Dorsolateral prefrontal cortex (tissue), 120 donors: ENCODE measurements at regions of chr5 and their contacts with region 1.

Region 1: GRCh38 chr5:132227485-132228240 is at the start of gene P4HA2:
- DNase-seq: peak; percentile 53 to 87 (median 78)
- H3K4me3 ChIP-seq: peak within 1 kb of the TSS; percentile 45 to 97 (median 85)
- H3K27ac ChIP-seq: peak within 1 kb of the TSS in 58 of 59 donors; percentile 1 to 99 (median 84)
- H3K27me3 ChIP-seq: no peaks in the 10 kb centered on the region
- CTCF ChIP-seq: peak in 10 of 56 donors; percentile 3 to 31 (median 14)
- total RNA-seq, gene P4HA2: 11.8 to 97.5 (median 27.5) TPM

Region 2: DNA sequence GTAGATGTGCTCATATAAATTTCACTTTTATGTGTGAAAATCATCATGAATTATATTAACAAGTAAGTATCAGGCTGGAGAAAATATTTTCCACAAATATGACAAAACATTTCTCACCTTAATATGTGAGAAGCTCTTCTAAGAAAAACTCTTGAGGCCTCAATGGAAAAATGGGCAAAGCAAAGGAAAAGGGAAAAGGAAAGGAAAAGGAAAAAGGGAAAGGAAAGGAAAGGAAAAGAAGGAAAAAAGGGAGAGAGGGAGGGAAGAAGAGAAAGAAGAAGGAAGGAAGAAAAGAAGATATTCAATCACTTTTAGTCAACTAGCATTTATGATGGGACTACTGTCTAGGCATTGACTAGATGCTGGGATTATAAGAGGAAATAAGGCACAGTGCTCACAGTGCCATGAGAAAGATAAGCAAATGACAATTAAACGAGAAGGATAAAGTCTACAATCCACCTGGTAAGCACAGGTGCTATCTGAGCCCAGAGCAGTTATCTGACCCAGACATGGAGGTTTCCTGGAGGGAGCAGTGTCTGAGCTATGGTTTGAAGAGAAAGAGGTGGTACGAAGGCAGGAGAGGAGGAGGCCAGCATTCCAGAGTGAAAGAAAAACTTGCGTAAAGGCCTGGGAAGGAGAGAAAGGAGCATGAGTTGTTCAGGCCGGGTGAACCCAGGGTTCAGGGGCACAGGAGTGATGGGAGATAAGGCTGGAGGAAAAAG is 197.9 kb before region 1 on chr5:
- intact Hi-C with region 1: no loop called
- DNase-seq: no peak
- H3K4me3 ChIP-seq: no peak overlapping the region
- H3K27ac ChIP-seq: no peak overlapping the region
- H3K27me3 ChIP-seq: no peaks in the 10 kb centered on the region
- CTCF ChIP-seq: no peak

Region 3: DNA sequence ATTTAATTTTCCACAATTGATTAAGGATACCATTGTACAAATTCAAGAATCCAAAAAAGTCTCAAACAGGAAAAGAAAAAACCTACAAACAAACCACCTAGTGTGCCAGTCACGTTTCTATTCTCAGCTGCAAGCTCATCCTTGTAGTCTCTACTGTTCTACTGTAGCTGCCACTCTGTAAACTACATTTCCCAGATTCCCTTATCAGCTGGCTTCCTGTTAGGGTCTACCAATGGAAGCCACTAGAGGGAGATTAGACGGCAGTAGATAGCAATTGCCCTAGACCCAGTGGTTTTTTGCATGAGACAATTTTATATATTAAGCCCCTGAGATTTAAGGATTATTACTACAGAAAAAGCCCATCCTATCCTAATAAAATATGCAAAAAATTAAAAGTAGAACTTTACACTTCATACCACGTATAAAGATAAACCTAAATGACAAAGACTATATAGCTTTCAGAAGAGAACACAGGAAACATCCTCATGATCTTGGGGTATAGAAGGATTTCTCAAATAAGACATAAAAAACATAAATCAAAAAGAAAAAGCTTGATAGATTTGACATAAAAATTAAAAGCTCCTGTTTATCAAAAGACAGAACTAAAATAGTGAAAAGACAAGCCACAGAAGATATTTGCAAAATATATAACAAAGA is 37.4 kb before region 1 on chr5:
- intact Hi-C with region 1: loop called in 1 of 2 experiments (anchors 5 kb)
- DNase-seq: peak in 2 of 10 donors; percentile 22 to 41
- H3K4me3 ChIP-seq: no peak overlapping the region
- H3K27ac ChIP-seq: no peak overlapping the region
- H3K27me3 ChIP-seq: no peaks in the 10 kb centered on the region
- CTCF ChIP-seq: peak; percentile 43 to 82 (median 70)

Region 4: GRCh38 chr5:132576123-132576522 is 348.5 kb after region 1 on chr5:
- intact Hi-C with region 1: no loop called
- DNase-seq: no peak
- H3K4me3 ChIP-seq: no peak overlapping the region
- H3K27ac ChIP-seq: no peak overlapping the region
- H3K27me3 ChIP-seq: no peaks in the 10 kb centered on the region
- CTCF ChIP-seq: no peak